ENCODE measurements at regions of chr9 and their contacts with region 1.

Region 1: DNA sequence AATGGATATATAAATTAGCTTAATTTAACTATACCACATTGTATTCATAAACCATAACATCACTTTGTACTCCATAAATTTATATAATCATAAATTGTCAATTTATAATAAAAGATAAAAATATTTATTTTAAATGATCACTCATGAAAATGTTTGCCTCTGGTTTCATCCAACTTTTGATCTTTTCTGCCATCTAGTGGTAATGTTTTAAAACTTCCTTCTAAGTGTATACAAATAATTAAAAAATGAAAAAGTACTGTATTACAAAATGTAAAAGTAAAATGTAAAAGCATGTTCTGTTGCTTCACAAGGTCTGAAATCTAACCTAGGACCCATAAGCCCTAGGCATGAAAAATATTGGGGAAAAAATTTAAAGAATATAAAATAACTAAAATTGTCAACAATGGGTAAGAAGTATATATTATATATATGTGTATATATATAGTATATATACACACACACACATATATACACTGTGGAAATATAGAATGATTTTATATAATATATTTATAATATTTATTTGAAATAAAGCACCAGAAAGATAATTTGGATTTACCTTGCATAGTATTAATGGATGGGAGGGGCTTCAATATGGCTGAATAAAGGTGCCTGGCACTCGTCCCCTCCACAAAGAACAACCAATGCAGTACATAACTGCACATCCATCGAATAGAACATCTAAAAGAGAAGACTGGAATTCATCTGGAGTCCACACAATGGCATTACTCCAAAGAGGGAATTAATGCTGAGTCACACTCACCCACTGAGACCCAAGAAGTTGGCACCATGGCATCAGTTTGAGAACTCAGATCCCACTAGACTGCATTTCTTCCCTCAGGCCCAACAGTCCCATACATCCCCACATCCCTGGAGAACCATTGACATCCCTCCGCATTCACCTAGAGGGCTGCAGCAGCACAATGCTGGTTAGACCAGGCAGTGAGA is 32.5 kb downstream of the ANXA1 start:
- DNase-seq: no peak
- ATAC-seq: no peak
- H3K4me3 ChIP-seq: no peak overlapping the region
- H3K27ac ChIP-seq: no peak overlapping the region
- H3K4me1 ChIP-seq: no peaks in the 10 kb centered on the region
- H3K27me3 ChIP-seq: no peaks in the 10 kb centered on the region

Region 2: DNA sequence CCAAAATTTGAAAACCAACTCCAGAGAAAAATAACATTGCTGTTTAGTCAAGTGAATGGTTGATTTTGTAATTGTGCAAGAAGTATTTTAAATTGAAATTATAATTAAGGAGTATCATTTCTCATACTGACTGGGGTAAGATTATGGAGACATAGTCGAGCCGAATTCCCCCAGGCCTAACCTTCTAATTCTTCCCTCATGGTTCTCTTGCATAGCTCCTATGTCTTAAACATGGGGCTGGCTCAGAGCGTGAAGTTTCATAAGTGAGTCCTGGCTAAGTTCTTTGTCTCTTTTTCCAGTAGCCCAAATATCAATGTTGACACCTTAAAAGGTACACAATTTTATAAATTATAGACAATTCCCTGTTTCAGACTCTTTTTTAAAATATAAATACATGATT is 79.3 kb before region 1 on chr9:
- intact Hi-C with region 1: loop called in 3 of 4 experiments (anchors 5 kb)
- DNase-seq: no peak
- ATAC-seq: no peak
- H3K4me3 ChIP-seq: no peak overlapping the region
- H3K27ac ChIP-seq: no peak overlapping the region
- H3K4me1 ChIP-seq: no peaks in the 10 kb centered on the region
- H3K27me3 ChIP-seq: no peaks in the 10 kb centered on the region

Region 3: DNA sequence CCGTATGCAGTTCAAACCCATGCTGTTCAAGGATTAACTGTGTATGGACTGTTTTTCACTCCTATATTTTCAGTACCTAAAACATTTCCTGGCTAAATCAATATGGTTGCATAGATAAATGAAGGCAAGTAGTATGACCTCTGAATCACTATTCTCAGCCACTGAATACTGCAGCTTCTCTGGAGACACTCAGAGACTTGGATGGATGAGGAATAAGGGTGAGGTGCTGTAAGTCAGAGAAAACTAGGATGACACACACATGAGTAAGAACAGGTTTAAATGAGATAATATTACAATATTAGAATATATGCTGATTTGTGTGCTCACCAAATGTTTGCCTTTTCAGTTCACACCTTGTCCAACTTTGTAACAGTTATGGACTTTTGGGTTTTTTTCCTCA is 58.5 kb before region 1 on chr9:
- intact Hi-C with region 1: loop called in 1 of 4 experiments (anchors 10 kb)
- DNase-seq: no peak
- ATAC-seq: no peak
- H3K4me3 ChIP-seq: no peak overlapping the region
- H3K27ac ChIP-seq: no peak overlapping the region
- H3K4me1 ChIP-seq: no peaks in the 10 kb centered on the region
- H3K27me3 ChIP-seq: no peaks in the 10 kb centered on the region